PC-9 (cell line): ENCODE measurements at regions of chr9 and their contacts with region 1.

Region 1: GRCh38 chr9:36499174-36499890 is 73.4 kb upstream of the MELK start:
- DNase-seq: no peak
- H3K4me3 ChIP-seq: no peak overlapping the region
- H3K27ac ChIP-seq: no peak overlapping the region
- H3K4me1 ChIP-seq: no peaks in the 10 kb centered on the region
- H3K27me3 ChIP-seq: no peaks in the 10 kb centered on the region
- CTCF ChIP-seq: no peak

Region 2: DNA sequence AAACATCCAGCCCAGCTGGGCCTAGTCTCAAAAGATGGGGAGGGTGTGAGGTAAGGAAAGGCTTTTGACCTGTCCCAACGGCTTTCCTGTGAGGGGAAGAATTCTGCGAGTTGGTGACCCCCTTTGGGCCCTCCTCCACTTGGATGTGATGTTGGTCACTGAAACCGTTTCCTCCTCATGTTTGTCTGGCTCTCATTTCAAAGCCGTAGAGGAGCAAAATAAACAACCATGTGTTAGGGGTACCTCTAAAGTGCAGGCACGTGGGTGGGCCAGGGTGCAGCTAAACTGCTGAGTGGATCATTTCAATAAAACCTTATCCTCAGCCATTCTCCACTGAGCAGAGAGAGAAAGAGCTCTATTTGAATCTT is 11.0 kb before region 1 on chr9:
- CTCF ChIA-PET with region 1: interaction called, 13 read pairs
- POLR2A ChIA-PET with region 1: no interaction called
- intact Hi-C with region 1: no loop called
- DNase-seq: no peak
- H3K4me3 ChIP-seq: peak overlapping the region; percentile 65
- H3K27ac ChIP-seq: no peak overlapping the region
- H3K4me1 ChIP-seq: peaks cover 10% of the 10 kb centered on the region; the same call in 1 of the 2 replicates
- H3K27me3 ChIP-seq: no peaks in the 10 kb centered on the region
- CTCF ChIP-seq: no peak

Region 3: GRCh38 chr9:36572515-36573418 is 73.4 kb after region 1 on chr9 and contains the start of gene MELK:
- CTCF ChIA-PET with region 1: no interaction called
- POLR2A ChIA-PET with region 1: no interaction called
- intact Hi-C with region 1: no loop called
- DNase-seq: peak; percentile 41 to 79
- H3K4me3 ChIP-seq: peak within 1 kb of the TSS; percentile 98
- H3K27ac ChIP-seq: peak within 1 kb of the TSS; percentile 50
- H3K4me1 ChIP-seq: peaks cover 23% of the 10 kb centered on the region
- H3K27me3 ChIP-seq: no peaks in the 10 kb centered on the region
- CTCF ChIP-seq: no peak
- total RNA-seq, gene MELK: 25.1 and 48.1 TPM in 2 replicates